AG04450 (cell line): ENCODE measurements at regions of chr6 and their contacts with region 1.

Region 1: DNA sequence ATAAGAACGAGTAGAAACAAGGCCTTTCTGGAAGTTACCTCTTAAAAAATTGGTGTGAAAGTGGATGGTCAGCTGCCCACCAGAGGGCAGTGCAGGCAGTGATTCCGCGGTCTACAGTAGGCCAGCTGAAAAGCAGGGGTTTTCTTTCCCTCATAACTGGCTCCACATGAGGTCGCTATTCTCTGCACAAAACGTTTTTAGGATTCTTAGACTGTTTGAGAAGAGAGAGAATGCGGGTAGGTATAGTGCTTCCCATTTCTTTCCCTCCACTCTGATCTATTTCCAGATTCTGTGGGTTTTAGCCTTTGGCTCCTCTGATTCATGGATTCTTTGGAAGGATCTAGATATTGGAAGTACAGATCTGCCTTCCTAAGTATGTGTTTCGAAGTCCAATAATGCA is 14.2 kb downstream of the FIG4 start:
- DNase-seq: peak; percentile 74
- H3K4me3 ChIP-seq: no peak overlapping the region
- H3K27ac ChIP-seq: no peak overlapping the region
- H3K27me3 ChIP-seq: no peaks in the 10 kb centered on the region
- CTCF ChIP-seq: peak; percentile 100

Region 2: DNA sequence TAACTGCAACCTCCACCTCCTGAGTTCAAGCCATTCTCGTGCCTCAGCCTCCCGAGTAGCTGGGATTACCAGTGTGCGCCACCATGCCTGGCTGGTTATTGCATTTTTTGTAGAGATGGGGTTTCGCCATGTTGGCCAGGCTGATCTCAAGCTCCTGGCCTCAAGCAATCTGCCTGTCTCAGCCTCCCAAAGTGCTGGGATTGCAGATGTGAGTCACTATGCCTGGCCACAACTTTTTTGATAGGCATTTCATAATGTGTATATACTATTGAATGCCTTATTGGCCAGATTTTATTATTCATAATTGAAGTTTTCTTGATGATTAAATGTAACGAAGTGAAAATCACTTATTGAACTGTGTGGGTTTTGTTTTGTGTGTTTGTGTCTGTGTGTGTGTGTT is 13.7 kb after region 1 on chr6:
- CTCF ChIA-PET with region 1: interaction called, 20 read pairs
- POLR2A ChIA-PET with region 1: no interaction called
- DNase-seq: no peak
- H3K4me3 ChIP-seq: no peak overlapping the region
- H3K27ac ChIP-seq: no peak overlapping the region
- H3K27me3 ChIP-seq: no peaks in the 10 kb centered on the region
- CTCF ChIP-seq: no peak

Region 3: GRCh38 chr6:110053395-110054240 is 348.4 kb after region 1 on chr6:
- CTCF ChIA-PET with region 1: interaction called, 21 read pairs
- POLR2A ChIA-PET with region 1: no interaction called
- DNase-seq: peak; percentile 24
- H3K4me3 ChIP-seq: no peak overlapping the region
- H3K27ac ChIP-seq: no peak overlapping the region
- H3K27me3 ChIP-seq: peaks cover 15% of the 10 kb centered on the region
- CTCF ChIP-seq: peak; percentile 82

Region 4: DNA sequence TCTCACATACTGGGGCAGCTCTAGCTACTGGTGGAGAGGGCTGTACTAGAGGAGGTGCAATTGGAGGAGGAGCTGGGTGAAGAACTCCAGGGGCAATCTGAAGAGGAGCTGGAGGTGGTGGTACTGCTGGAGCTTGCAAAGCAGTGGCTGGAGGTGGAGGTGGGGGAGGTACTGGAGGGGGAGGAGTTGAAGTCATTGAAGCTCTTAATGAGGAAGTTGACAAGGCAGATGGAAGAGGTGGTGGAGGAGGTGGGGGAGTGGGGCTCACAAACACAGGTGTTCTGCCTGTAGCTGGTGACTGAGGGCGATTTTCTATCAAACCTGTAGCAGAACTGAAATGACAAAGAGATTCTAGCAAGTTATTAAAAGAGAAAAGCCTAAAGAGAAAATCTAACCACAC is 396.6 kb after region 1 on chr6:
- CTCF ChIA-PET with region 1: interaction called, 10 read pairs
- POLR2A ChIA-PET with region 1: no interaction called
- DNase-seq: no peak
- H3K4me3 ChIP-seq: no peak overlapping the region
- H3K27ac ChIP-seq: no peak overlapping the region
- H3K27me3 ChIP-seq: no peaks in the 10 kb centered on the region
- CTCF ChIP-seq: no peak

Region 5: GRCh38 chr6:110408891-110409290 is 703.6 kb after region 1 on chr6:
- CTCF ChIA-PET with region 1: no interaction called
- POLR2A ChIA-PET with region 1: no interaction called
- DNase-seq: no peak
- H3K4me3 ChIP-seq: no peak overlapping the region
- H3K27ac ChIP-seq: no peak overlapping the region
- H3K27me3 ChIP-seq: peaks cover 11% of the 10 kb centered on the region
- CTCF ChIP-seq: no peak